Activated B cell treated with CpG ODN at 0.5 μM for 24 hours (primary cell): ENCODE measurements at regions of chr4 and their contacts with region 1.

Region 1: DNA sequence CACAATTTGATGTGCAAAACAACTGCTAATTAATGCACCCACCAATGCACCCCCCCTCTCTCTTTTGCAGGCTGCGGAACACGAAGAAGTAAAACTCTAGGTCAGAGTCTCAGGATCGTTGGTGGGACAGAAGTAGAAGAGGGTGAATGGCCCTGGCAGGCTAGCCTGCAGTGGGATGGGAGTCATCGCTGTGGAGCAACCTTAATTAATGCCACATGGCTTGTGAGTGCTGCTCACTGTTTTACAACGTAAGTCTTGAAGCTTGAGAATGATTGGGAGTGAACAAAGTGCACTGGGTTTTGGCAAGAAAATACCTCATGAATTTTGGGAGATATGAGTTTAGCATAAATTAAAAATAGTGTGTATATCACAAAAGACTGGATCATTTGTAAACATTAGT is 28.9 kb downstream of the TMPRSS11E start:
- DNase-seq: no peak
- ATAC-seq: no peak
- H3K4me3 Mint-ChIP-seq: no peak overlapping the region
- H3K27ac Mint-ChIP-seq: no peak overlapping the region
- H3K4me1 Mint-ChIP-seq: no peaks in the 10 kb centered on the region
- H3K27me3 Mint-ChIP-seq: peaks cover 1% of the 10 kb centered on the region
- CTCF ChIP-seq: no peak

Region 2: DNA sequence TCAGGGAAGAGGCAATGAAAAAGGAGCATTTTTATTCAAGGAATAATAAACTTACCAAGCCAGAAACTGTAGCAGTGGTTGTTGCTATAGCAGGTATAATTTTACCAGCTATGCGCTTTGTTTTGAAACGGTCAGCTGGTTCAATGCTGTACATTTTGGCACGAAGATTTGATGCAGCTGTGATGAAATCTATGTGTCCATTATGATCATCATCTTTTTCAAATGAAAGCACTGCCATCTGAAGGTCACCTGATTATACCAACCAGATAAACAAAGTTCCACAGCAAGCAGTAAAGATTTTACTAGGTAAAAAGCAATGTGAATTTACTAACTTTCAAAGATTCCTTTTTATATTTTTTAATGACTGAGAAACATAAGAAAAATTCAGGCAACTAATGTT is 851.3 kb before region 1 on chr4:
- CTCF ChIA-PET with region 1: no interaction called
- POLR2A ChIA-PET with region 1: no interaction called
- intact Hi-C with region 1: no loop called
- DNase-seq: no peak
- ATAC-seq: no peak
- H3K4me3 Mint-ChIP-seq: no peak overlapping the region
- H3K27ac Mint-ChIP-seq: no peak overlapping the region
- H3K4me1 Mint-ChIP-seq: no peaks in the 10 kb centered on the region
- H3K27me3 Mint-ChIP-seq: no peaks in the 10 kb centered on the region
- CTCF ChIP-seq: no peak

Region 3: DNA sequence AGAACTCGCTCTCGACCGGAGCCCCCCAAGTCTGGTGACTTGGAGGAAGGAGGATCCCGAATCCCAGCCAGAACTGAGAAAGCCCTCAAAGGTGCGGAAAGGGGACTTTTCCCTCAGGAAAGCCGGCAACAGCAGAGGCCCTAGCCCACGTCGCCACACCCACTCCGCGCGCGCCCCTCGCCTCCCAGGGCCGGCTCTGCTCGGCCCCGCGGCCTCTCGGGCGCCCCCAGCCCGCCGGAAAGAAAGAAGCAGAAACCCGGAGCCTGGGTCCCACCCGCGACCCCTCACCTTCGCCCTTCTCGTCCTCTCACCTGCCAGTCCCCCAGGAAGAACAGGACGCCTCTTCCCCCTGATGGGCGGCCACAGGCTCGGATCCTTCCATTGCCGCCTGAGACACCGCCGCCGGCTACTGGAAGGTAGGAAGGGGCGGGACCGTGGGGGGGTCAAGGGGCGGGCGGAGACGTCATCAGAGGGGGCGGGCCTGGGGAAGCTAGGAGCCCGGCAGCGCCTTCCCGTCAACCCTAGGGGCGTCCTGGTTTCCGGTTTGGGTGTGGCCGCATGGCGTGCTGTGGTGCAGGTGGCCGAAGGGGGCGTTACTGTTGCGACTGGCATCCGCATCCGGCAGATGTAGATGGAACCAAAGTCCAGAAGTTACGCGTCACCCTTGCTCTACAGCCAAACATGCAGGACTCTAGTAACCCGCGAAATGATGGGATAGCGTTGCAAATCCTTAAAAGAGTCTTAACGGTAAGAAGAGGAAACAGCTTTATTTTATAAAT is 775.3 kb before region 1 on chr4 and contains the start of gene UBA6:
- CTCF ChIA-PET with region 1: no interaction called
- POLR2A ChIA-PET with region 1: no interaction called
- intact Hi-C with region 1: no loop called
- DNase-seq: peak; percentile 89
- ATAC-seq: peak; percentile 95
- H3K4me3 Mint-ChIP-seq: peak within 1 kb of the TSS; percentile 92
- H3K27ac Mint-ChIP-seq: peak within 1 kb of the TSS; percentile 94
- H3K4me1 Mint-ChIP-seq: peaks cover 61% of the 10 kb centered on the region
- H3K27me3 Mint-ChIP-seq: no peaks in the 10 kb centered on the region
- CTCF ChIP-seq: no peak
- total RNA-seq, gene UBA6: 63.0 and 70.4 TPM in 2 replicates

Region 4: GRCh38 chr4:67928575-67928974 is 547.6 kb before region 1 on chr4:
- CTCF ChIA-PET with region 1: no interaction called
- POLR2A ChIA-PET with region 1: no interaction called
- intact Hi-C with region 1: no loop called
- DNase-seq: no peak
- ATAC-seq: no peak
- H3K4me3 Mint-ChIP-seq: no peak overlapping the region
- H3K27ac Mint-ChIP-seq: no peak overlapping the region
- H3K4me1 Mint-ChIP-seq: no peaks in the 10 kb centered on the region
- H3K27me3 Mint-ChIP-seq: peaks cover 2% of the 10 kb centered on the region
- CTCF ChIP-seq: no peak

Region 5: GRCh38 chr4:68466185-68466584 is 10.0 kb before region 1 on chr4:
- CTCF ChIA-PET with region 1: no interaction called
- POLR2A ChIA-PET with region 1: no interaction called
- intact Hi-C with region 1: loop called (anchors 1 kb)
- DNase-seq: no peak
- ATAC-seq: no peak
- H3K4me3 Mint-ChIP-seq: no peak overlapping the region
- H3K27ac Mint-ChIP-seq: no peak overlapping the region
- H3K4me1 Mint-ChIP-seq: no peaks in the 10 kb centered on the region
- H3K27me3 Mint-ChIP-seq: no peaks in the 10 kb centered on the region
- CTCF ChIP-seq: no peak

Region 6: GRCh38 chr4:69322055-69322454 is 845.9 kb after region 1 on chr4:
- CTCF ChIA-PET with region 1: no interaction called
- POLR2A ChIA-PET with region 1: no interaction called
- intact Hi-C with region 1: no loop called
- DNase-seq: no peak
- ATAC-seq: no peak
- H3K4me3 Mint-ChIP-seq: no peak overlapping the region
- H3K27ac Mint-ChIP-seq: no peak overlapping the region
- H3K4me1 Mint-ChIP-seq: no peaks in the 10 kb centered on the region
- H3K27me3 Mint-ChIP-seq: no peaks in the 10 kb centered on the region
- CTCF ChIP-seq: no peak